ENCODE measurements at regions of chr2 and their contacts with region 1.

Region 1: DNA sequence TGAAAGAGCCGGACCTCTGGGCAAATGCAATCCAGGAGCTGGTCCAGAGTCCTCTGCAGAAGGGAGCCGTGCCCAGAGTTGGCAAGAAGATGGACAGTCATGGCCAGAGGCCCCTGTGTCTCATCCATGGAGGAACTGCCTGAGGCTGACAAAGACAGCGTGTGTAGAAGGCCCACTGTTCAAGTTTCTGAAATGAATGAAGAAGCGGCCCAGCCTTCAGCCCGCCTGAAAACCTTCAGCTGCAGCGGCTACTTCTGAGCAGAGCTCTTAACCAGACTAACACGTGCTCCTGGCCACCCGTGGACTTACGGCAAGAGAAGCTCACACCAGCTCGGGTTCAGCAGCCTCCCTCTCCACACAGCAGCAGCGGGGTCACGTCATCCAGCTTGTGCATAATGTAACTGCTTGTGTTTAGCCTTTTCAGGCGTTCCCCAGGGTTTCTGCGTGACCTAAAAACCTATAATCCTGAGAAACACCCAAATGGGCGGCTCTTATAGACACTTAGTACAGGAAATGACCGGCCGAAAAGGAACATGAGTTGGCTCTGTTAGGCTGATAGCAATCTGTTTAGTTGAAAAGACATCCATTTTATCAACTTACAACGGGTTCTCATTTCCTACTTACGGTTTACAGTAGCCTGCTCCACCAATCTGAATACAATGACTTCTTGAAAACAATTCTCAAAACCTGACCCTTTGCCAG is at the start of gene FAM124B:
- DNase-seq: peak; percentile 71
- ATAC-seq: peak; percentile 92
- total RNA-seq, gene FAM124B: 1.2 TPM

Region 2: DNA sequence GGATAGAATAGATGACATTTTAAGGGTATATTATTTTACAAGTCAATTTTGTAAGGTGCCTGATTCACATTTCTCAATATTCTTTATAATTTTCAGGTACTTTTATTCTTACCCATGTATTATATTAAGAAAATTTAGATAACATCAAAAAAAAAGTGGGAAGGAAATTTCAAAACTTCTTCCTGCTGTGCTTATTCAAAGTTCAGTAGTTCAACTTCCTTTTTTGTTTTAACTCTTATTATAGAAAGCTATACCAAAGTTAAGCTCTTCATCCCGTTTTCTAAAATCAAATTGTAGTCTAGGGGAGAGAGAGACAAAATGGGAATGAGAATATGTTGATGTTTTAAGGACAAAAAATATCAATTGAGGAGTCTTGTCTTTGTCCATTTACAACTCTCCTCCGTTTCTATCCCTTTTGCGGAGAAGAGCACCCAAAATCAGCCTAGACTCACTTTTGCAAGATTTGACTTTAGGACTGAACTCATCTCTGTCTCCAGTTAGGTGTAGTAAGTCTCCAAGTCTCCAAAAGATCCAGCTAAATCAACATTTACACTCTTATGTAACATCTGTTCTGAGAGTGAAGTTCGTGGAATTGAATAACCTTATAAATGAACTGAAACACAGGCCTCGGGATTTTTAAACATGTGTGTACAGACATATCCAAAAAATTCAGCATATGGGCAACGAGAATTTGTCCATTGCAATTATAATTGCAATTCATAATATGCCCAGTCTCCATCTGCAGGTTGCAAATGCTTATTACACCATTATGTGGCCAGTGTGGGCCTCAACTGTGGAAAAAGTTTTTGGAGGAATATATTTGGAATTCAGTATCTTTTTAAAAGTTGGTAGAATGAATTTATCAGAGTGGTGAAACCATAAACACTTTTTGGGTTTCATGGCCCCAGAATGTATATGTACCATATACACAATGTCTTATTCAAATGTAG is 23.8 kb before region 1 on chr2:
- intact Hi-C with region 1: loop called (anchors 2 kb)
- DNase-seq: no peak
- ATAC-seq: no peak